ENCODE measurements at regions of chr11 and their contacts with region 1.

Region 1: GRCh38 chr11:47328404-47329390 is 23.8 kb downstream of the MYBPC3 start:
- DNase-seq: no peak
- H3K4me3 ChIP-seq: no peak overlapping the region
- H3K27ac ChIP-seq: no peak overlapping the region
- H3K4me1 ChIP-seq: no peaks in the 10 kb centered on the region
- H3K27me3 ChIP-seq: no peaks in the 10 kb centered on the region
- CTCF ChIP-seq: no peak

Region 2: DNA sequence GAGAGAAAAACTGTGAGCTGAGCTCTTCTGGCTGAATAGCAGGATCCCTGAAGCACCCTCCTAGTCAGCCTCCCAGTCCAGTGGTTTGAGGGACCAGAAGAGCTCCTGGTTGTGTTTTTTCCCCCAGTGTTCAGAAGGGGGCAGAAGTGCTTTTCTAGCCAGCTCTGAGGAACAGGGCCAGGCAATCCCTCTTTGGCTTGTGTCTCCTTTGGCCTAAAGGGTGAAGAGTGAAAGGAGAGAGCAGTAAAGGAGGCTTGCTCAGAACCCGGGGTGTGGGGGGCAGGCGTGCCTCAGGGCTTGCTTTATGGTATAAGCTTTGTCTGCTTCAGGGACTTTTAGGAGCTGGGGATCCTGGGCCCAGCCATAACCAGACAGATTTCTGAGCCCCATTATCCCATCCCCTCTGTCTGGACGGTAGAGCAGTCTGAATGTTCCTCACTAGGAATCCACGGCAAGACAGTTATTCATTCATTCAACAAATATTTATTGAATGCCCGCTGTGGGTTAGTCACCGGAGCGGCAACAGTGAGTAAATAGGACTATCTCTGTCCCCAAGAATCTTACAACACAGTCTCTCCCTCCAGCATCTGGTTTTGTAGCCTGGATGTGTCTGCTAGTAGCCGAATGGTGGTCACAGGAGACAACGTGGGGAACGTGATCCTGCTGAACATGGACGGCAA is 94.6 kb before region 1 on chr11:
- CTCF ChIA-PET with region 1: no interaction called
- POLR2A ChIA-PET with region 1: interaction called, 12 read pairs
- intact Hi-C with region 1: no loop called
- DNase-seq: peak; percentile 75
- H3K4me3 ChIP-seq: no peak overlapping the region
- H3K27ac ChIP-seq: no peak overlapping the region
- H3K4me1 ChIP-seq: peaks cover 14% of the 10 kb centered on the region
- H3K27me3 ChIP-seq: no peaks in the 10 kb centered on the region
- CTCF ChIP-seq: peak; percentile 60

Measured in A673 (cell line).